ENCODE measurements at regions of chr2 and their contacts with region 1.

Region 1: GRCh38 chr2:85538486-85539360 is at the start of gene MAT2A:
- DNase-seq: peak; percentile 74 to 97
- ATAC-seq: peak; percentile 75 to 82
- H3K4me3 ChIP-seq: peak within 1 kb of the TSS; percentile 98
- H3K27ac ChIP-seq: peak within 1 kb of the TSS; percentile 98 to 100
- H3K4me1 ChIP-seq: peaks cover 47% of the 10 kb centered on the region
- CTCF ChIP-seq: peak; percentile 60
- EP300 ChIP-seq: no peak
- POLR2A ChIP-seq: peak; percentile 100
- RAD21 ChIP-seq: peak; percentile 56 to 63; a peak in 4 of 5 replicates
- polyA plus RNA-seq, gene MAT2A: 1,024 and 1,329 TPM in 2 replicates

Region 2: DNA sequence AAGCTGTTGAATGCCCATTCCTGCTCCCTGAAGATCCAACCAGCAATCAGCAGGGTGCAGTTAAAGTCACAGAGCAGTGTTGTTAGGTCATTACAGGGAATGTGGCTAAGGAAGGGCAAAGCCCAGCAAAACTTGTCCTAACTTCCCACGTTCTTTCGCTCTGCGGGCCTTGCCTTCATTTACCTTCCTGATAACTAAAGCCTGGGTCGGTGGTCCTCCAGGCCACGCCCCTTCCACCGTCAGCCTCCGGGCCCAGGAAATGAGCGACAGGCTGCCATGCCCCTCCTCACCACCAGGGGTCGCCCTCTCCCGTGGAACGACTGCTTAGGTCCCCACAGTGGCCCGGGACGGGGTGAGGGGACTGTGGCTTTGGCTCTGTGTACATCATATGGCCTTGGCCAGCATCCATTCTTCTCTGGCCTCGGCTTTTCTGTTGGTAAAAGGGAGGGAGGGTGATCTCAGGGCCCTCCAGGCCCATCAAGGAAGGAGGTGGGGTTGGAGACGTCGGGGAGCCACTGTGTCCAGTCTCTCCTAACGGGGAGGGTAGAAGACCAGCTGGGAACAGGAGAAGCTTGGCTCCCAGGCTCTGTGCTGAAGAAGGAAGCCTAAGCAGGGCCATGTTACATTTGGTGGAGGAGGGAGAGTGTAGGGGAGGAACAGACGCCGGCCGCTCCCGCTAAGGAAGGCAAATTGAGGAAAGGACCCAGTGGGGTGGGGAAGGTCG is 118.0 kb before region 1 on chr2:
- CTCF ChIA-PET with region 1: interaction called, 1,185 read pairs
- POLR2A ChIA-PET with region 1: interaction called, 261 read pairs
- DNase-seq: peak; percentile 92 to 97
- ATAC-seq: peak; percentile 57 to 70
- H3K4me3 ChIP-seq: peak overlapping the region; percentile 16; the same call in 1 of the 3 replicates
- H3K27ac ChIP-seq: peak overlapping the region; percentile 96 to 98
- H3K4me1 ChIP-seq: peaks cover 44% of the 10 kb centered on the region
- CTCF ChIP-seq: peak; percentile 99
- EP300 ChIP-seq: no peak
- POLR2A ChIP-seq: no peak
- RAD21 ChIP-seq: peak; percentile 100

Region 3: DNA sequence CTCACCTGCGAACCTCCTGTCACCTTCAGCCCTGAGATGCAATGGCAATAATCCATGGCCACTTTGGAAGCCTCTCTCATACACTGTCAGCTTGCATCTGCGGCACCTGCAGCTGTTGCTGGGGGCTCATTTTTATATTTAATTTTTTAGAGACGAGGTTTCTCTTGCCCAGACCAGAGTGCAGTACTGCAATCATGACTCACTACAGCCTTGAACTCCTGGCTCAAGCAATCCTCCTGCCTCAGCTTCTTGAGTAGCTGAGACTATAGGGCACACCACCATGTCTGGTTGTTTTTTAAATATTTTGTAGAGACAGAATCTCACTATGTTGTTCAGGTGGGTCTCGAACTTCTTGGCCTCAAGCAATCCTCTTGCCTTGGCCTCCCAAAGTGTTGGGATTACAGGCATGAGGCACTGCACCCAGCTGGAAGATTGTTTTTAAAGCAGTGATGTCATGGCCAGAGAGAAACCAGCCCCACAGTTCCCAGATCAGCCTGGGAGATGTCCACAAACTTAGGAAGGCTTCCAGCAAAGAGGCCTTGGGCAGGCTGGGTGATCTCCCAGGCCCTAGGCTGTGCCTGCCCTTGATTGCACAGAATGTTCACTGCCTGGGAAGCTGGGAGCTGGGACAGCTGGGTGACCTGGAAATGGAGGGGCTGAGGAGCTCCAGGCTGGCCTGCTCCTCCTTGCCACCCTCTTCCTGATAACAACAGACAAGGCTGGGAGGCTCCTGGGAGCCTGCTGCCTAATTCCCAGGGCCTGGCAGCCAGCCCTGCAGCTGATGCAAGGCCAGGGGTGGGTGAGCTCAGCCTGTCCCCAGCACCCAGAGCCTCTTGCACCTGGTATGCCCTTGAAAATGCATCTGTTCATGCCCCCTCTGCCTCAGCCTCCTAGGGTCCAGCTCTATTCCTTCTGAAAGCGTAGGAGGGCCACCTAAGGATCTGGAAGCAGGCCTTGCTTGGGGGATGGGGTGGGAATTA is 93.1 kb before region 1 on chr2:
- CTCF ChIA-PET with region 1: interaction called, 19 read pairs
- POLR2A ChIA-PET with region 1: interaction called, 153 read pairs
- DNase-seq: peak in 1 of 2 experiments; percentile 67
- ATAC-seq: peak; percentile 68 to 76
- H3K4me3 ChIP-seq: no peak overlapping the region
- H3K27ac ChIP-seq: peak overlapping the region; percentile 84 to 92
- H3K4me1 ChIP-seq: peaks cover 30% of the 10 kb centered on the region
- CTCF ChIP-seq: no peak
- EP300 ChIP-seq: no peak
- POLR2A ChIP-seq: no peak
- RAD21 ChIP-seq: no peak

Region 4: GRCh38 chr2:85511008-85511811 is 27.5 kb before region 1 on chr2:
- CTCF ChIA-PET with region 1: interaction called, 145 read pairs
- POLR2A ChIA-PET with region 1: interaction called, 88 read pairs
- DNase-seq: no peak
- ATAC-seq: no peak; a peak in 1 of 6 replicates
- H3K4me3 ChIP-seq: no peak overlapping the region
- H3K27ac ChIP-seq: peak overlapping the region; percentile 1 to 58; a peak in 4 of 6 replicates
- H3K4me1 ChIP-seq: peaks cover 26% of the 10 kb centered on the region
- CTCF ChIP-seq: no peak
- EP300 ChIP-seq: no peak
- POLR2A ChIP-seq: no peak
- RAD21 ChIP-seq: no peak

Region 5: DNA sequence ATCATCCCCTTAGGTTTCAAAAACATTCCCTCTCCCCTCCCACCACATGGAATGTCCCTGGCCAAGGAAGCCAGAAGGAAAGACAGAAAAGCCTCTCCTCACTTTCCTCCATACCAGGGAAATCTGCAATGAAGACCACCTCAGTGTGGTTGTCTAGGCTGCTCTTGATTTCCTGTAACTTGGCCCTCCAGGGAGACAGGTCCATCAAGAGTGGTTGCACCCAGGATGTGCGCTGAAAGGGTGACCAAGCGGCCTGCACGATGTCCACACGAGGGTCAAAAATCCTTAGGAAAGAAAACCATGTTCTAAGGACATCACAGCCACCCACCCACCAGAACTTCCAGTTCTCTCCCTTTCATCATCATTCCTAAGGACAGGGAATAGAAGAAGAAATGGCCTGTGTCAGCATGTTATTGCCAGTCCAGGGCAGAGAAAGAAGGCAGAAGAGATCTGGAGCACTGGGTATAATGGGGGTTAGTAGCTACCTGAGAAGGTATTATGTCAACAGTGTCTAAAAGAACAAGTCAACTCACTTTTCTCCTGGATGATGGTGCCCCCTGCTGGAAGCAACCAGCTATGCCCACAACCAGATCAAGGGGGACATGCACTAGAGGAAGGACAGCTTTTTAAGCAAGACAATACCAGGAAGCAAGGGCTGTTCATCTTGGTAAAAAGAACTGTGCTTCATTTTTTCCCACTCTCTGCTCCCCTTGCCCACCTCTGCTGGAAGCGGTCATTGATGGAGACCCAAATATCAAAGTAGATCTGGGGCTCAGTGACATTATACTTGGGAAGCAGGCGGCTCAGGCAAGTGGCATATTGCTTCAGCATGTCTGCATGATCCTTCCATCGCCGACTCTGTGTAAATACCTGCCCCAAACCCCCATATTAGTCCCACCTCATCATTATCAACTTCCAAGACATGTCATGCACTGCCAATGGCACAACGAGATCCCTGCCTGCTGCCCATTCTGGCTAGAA is 13.3 kb after region 1 on chr2:
- CTCF ChIA-PET with region 1: interaction called, 183 read pairs
- POLR2A ChIA-PET with region 1: interaction called, 109 read pairs
- DNase-seq: peak in 1 of 2 experiments; percentile 87
- ATAC-seq: peak; percentile 52 to 64
- H3K4me3 ChIP-seq: no peak overlapping the region
- H3K27ac ChIP-seq: peak overlapping the region; percentile 34 to 45; a peak in 5 of 6 replicates
- H3K4me1 ChIP-seq: peaks cover 10% of the 10 kb centered on the region
- CTCF ChIP-seq: peak; percentile 98
- EP300 ChIP-seq: no peak
- POLR2A ChIP-seq: no peak
- RAD21 ChIP-seq: peak; percentile 99 to 100

Region 6: DNA sequence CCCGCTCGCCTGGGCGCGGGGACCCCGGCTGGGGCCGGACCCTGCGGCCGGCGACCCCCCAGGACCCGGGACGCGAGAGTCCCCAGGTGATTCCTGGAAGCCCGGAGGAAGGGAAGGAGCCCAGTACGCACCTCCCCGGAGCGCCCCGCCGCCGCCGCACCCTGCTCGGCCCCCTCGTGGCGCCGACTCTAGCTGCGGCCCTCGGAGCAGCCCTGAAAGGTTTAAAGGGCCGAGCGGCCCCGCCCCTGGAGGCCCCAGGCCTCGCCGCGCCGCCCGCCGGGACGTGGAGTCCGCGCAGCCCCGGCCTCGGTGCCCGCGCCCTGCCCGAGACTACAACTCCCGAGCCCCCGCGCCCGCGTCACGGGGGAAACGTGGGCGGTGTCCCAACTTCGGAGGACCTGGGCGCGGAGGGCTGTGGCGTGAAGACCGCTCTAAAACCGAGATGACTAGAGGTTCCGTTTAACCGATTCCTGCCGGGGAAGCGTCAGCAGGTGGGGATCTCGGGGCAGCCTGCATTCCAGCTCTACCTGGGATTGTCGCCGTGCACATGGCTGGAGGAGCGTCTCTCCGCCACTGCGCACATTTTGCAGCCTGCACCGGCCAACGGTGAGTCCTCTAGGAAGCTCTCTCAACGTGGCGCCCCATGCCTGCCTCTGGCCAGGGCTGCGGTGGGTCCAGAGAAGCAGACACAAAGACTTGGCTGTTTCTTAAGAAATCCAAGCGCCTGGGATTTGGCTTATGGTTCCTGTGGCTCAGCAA is 63.9 kb after region 1 on chr2 and contains the start of gene TMEM150A:
- CTCF ChIA-PET with region 1: no interaction called
- POLR2A ChIA-PET with region 1: interaction called, 10 read pairs
- DNase-seq: peak; percentile 83 to 88
- ATAC-seq: peak; percentile 87 to 94
- H3K4me3 ChIP-seq: peak within 1 kb of the TSS; percentile 66
- H3K27ac ChIP-seq: peak within 1 kb of the TSS; percentile 88 to 92
- H3K4me1 ChIP-seq: peaks cover 20% of the 10 kb centered on the region
- CTCF ChIP-seq: peak; percentile 17; the same call in 1 of the 3 replicates
- EP300 ChIP-seq: no peak
- POLR2A ChIP-seq: peak; percentile 63
- RAD21 ChIP-seq: 0 out of 5 replicates have a peak, but pooled peaks have one; percentile 10 to 13
- polyA plus RNA-seq, gene TMEM150A: 8.5 and 14.0 TPM in 2 replicates

Region 7: GRCh38 chr2:85741833-85742455 is 203.2 kb after region 1 on chr2:
- CTCF ChIA-PET with region 1: no interaction called
- POLR2A ChIA-PET with region 1: no interaction called
- DNase-seq: peak; percentile 73 to 92
- ATAC-seq: peak; percentile 81 to 86
- H3K4me3 ChIP-seq: peak overlapping the region; percentile 21; the same call in 2 of the 3 replicates
- H3K27ac ChIP-seq: peak overlapping the region; percentile 93 to 97
- H3K4me1 ChIP-seq: peaks cover 60% of the 10 kb centered on the region
- CTCF ChIP-seq: no peak
- EP300 ChIP-seq: peak; percentile 45 to 89; a peak in 3 of 5 replicates
- POLR2A ChIP-seq: no peak
- RAD21 ChIP-seq: peak in 1 of 2 experiments; percentile 43; a peak in 3 of 5 replicates

Measured in A549 (cell line).